Caco-2 (cell line): ENCODE measurements at regions of chr10 and their contacts with region 1.

Region 1: GRCh38 chr10:120423431-120424197 is 33.4 kb upstream of the PLPP4 start:
- DNase-seq: peak; percentile 55 to 64
- H3K4me3 ChIP-seq: no peak overlapping the region
- H3K4me3 Mint-ChIP-seq: no peak overlapping the region
- H3K27ac Mint-ChIP-seq: no peak overlapping the region
- H3K4me1 ChIP-seq: no peaks in the 10 kb centered on the region
- H3K4me1 Mint-ChIP-seq: no peaks in the 10 kb centered on the region
- H3K27me3 ChIP-seq: peaks cover under 1% of the 10 kb centered on the region; the same call in 1 of the 2 replicates
- H3K27me3 Mint-ChIP-seq: peaks cover 19% of the 10 kb centered on the region
- CTCF ChIP-seq: peak; percentile 84 to 91

Region 2: DNA sequence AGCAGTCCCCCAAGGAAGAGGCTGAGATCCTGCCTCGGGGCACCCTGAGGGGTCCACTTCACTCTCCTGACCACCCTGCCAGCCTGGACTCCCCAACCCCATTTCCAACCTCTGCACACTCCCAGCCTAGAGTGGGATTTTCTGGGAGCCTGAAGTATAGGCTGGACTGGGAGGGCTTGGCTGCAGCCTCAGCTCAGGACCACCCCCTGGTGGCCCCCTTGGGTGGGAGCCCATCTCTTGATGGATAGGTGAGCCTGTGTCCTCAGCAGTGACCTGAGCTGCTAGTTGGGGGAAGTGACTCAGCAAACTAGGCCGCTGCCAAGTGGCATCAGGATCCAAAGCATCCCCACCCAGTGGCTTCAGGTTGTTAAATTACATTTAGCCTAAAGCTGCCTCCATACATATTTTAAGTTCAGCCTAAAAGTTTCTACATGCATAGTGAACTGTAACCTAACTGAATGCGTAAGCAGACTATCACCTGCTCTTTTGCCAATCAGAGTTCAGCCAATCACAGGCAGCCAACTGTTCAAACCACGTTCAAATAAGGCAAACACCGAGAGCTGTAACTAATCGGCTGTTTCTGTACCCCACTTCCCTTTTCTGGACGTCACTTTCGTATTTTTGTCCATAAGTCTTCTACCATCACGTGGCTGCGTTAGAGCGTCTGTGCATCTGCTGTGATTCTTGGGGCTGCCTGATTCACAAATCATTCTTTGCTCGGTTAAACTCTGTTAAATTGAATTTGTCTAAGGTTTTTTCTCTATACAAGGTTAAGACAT is 177.4 kb after region 1 on chr10:
- CTCF ChIA-PET with region 1: no interaction called
- POLR2A ChIA-PET with region 1: no interaction called
- intact Hi-C with region 1: loop called (anchors 1 kb)
- DNase-seq: peak in 1 of 2 experiments; percentile 36
- H3K4me3 ChIP-seq: no peak overlapping the region
- H3K4me3 Mint-ChIP-seq: no peak overlapping the region
- H3K27ac Mint-ChIP-seq: no peak overlapping the region
- H3K4me1 ChIP-seq: no peaks in the 10 kb centered on the region
- H3K4me1 Mint-ChIP-seq: no peaks in the 10 kb centered on the region
- H3K27me3 ChIP-seq: peaks cover 1% of the 10 kb centered on the region
- H3K27me3 Mint-ChIP-seq: peaks cover 10% of the 10 kb centered on the region
- CTCF ChIP-seq: peak in 1 of 2 experiments; percentile 31

Region 3: GRCh38 chr10:120735773-120736371 is 312.3 kb after region 1 on chr10:
- CTCF ChIA-PET with region 1: interaction called, 3 read pairs
- POLR2A ChIA-PET with region 1: no interaction called
- intact Hi-C with region 1: loop called (anchors 1 kb)
- DNase-seq: no peak
- H3K4me3 ChIP-seq: no peak overlapping the region
- H3K4me3 Mint-ChIP-seq: no peak overlapping the region
- H3K27ac Mint-ChIP-seq: no peak overlapping the region
- H3K4me1 ChIP-seq: no peaks in the 10 kb centered on the region
- H3K4me1 Mint-ChIP-seq: no peaks in the 10 kb centered on the region
- H3K27me3 ChIP-seq: no peaks in the 10 kb centered on the region; the same call in 1 of the 2 replicates
- H3K27me3 Mint-ChIP-seq: peaks cover 5% of the 10 kb centered on the region
- CTCF ChIP-seq: peak; percentile 65 to 73